GM12878 (cell line): ENCODE measurements at regions of chr14 and their contacts with region 1.

Region 1: GRCh38 chr14:69611201-69612011 is at the start of gene SUSD6:
- DNase-seq: no peak
- ATAC-seq: peak; percentile 62
- H3K4me3 ChIP-seq: peak within 1 kb of the TSS; percentile 88
- H3K27ac ChIP-seq: peak within 1 kb of the TSS; percentile 97
- H3K4me1 ChIP-seq: peaks cover 21% of the 10 kb centered on the region
- H3K27me3 ChIP-seq: no peaks in the 10 kb centered on the region
- CTCF ChIP-seq: no peak
- EP300 ChIP-seq: no peak
- POLR2A ChIP-seq: peak; percentile 76
- RAD21 ChIP-seq: no peak
- polyA plus RNA-seq, gene SUSD6: 6.6 to 9.4 TPM

Region 2: DNA sequence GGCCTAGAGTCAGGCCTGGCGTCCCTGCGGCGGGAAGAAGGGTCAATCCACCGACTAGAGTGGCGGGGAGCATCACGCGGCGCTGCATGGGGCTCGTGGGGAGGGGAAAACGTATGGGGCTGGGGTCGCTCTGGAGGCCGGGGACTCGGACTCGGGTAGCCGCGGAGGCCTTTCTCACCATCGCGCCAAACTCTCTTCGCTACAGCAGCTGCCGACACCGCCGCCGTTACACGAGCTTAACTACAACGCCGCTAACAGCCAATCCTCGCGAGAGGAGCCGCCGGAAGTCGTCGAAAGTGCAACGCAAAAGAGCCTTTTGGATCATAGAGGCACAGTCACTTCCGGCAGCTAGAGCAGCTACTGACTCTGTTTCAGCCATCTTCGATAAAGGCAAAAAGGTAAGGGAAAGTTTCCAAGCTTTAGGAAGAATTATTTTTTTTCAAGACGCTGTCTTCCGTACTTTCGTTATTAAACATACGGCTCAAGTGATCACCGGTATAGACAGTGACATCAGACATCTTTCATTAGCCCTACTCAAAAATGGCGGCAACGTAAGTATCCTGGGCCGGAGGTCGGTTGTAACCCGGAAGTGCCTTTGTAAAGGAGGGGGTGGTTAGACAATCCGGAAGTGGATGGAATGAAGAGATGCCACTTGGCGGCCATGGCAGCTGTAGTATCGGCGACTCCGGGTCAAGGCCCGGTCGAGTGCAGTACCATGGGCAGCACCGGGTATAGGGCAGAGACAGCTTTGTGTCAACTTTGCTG is 213.2 kb before region 1 on chr14 and contains the starts of genes ERH and SLC39A9:
- CTCF ChIA-PET with region 1: no interaction called
- POLR2A ChIA-PET with region 1: no interaction called
- RAD21 ChIA-PET with region 1: no interaction called
- SMC1A ChIA-PET with region 1: no interaction called
- in situ Hi-C with region 1: no loop called
- intact Hi-C with region 1: loop called (anchors 10 kb)
- DNase-seq: peak; percentile 97
- ATAC-seq: peak; percentile 85
- H3K4me3 ChIP-seq: peak within 1 kb of the TSS; percentile 98
- H3K27ac ChIP-seq: peak within 1 kb of the TSS; percentile 90
- H3K4me1 ChIP-seq: peaks cover 16% of the 10 kb centered on the region
- H3K27me3 ChIP-seq: no peaks in the 10 kb centered on the region
- CTCF ChIP-seq: no peak
- EP300 ChIP-seq: no peak
- POLR2A ChIP-seq: peak; percentile 91
- RAD21 ChIP-seq: no peak
- polyA plus RNA-seq, gene ERH: 538 to 852 TPM
- polyA plus RNA-seq, gene SLC39A9: 19.9 to 29.5 TPM

Region 3: GRCh38 chr14:69423279-69423678 is 188.1 kb before region 1 on chr14:
- CTCF ChIA-PET with region 1: no interaction called
- POLR2A ChIA-PET with region 1: no interaction called
- RAD21 ChIA-PET with region 1: no interaction called
- SMC1A ChIA-PET with region 1: no interaction called
- in situ Hi-C with region 1: no loop called
- intact Hi-C with region 1: no loop called
- DNase-seq: no peak
- ATAC-seq: no peak
- H3K4me3 ChIP-seq: no peak overlapping the region
- H3K27ac ChIP-seq: no peak overlapping the region
- H3K4me1 ChIP-seq: peaks cover 9% of the 10 kb centered on the region; the same call in 1 of the 2 replicates
- H3K27me3 ChIP-seq: no peaks in the 10 kb centered on the region
- CTCF ChIP-seq: no peak
- EP300 ChIP-seq: no peak
- POLR2A ChIP-seq: no peak
- RAD21 ChIP-seq: no peak

Region 4: DNA sequence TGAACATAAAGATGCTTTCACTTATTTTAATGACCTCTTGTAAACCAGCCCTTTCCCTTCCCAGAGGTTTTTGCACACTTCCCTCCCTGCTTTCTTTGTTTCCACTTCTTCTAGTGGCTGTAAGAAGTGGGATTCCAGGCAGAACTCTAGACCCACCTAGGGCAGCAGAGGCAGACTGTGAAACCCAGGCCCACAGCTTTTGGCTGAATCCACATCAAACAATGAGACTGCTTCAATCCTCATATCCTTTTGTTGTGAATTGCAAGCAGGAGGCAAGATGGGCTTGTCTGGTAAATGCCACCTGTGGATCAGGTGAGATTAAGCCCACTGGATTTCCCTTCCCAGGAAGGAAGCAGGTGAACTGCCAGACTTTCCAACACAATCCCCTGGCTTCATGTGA is 49.5 kb before region 1 on chr14:
- CTCF ChIA-PET with region 1: no interaction called
- POLR2A ChIA-PET with region 1: no interaction called
- RAD21 ChIA-PET with region 1: no interaction called
- SMC1A ChIA-PET with region 1: no interaction called
- in situ Hi-C with region 1: no loop called
- intact Hi-C with region 1: no loop called
- DNase-seq: no peak
- ATAC-seq: no peak
- H3K4me3 ChIP-seq: no peak overlapping the region
- H3K27ac ChIP-seq: no peak overlapping the region
- H3K4me1 ChIP-seq: no peaks in the 10 kb centered on the region
- H3K27me3 ChIP-seq: peaks cover 0 to 3% of the 10 kb centered on the region in 2 experiments; a peak in 3 of 4 replicates
- CTCF ChIP-seq: no peak
- EP300 ChIP-seq: no peak
- POLR2A ChIP-seq: no peak
- RAD21 ChIP-seq: no peak

Region 5: GRCh38 chr14:69637503-69638030 is 26.2 kb after region 1 on chr14:
- CTCF ChIA-PET with region 1: interaction called, 6 read pairs
- POLR2A ChIA-PET with region 1: interaction called, 9 read pairs
- RAD21 ChIA-PET with region 1: interaction called, 37 read pairs
- SMC1A ChIA-PET with region 1: interaction called, 135 read pairs
- in situ Hi-C with region 1: no loop called
- intact Hi-C with region 1: no loop called
- DNase-seq: no peak
- ATAC-seq: peak; percentile 57
- H3K4me3 ChIP-seq: peak overlapping the region; percentile 43; the same call in 1 of the 2 replicates
- H3K27ac ChIP-seq: peak overlapping the region; percentile 72
- H3K4me1 ChIP-seq: peaks cover 65% of the 10 kb centered on the region
- H3K27me3 ChIP-seq: no peaks in the 10 kb centered on the region
- CTCF ChIP-seq: no peak
- EP300 ChIP-seq: no peak
- POLR2A ChIP-seq: no peak
- RAD21 ChIP-seq: no peak

Region 6: GRCh38 chr14:69648477-69649451 is 37.4 kb after region 1 on chr14:
- CTCF ChIA-PET with region 1: interaction called, 36 read pairs
- POLR2A ChIA-PET with region 1: interaction called, 22 read pairs
- RAD21 ChIA-PET with region 1: interaction called, 178 read pairs
- SMC1A ChIA-PET with region 1: interaction called, 164 read pairs
- in situ Hi-C with region 1: no loop called
- intact Hi-C with region 1: loop called (anchors 2 kb)
- DNase-seq: peak; percentile 81
- ATAC-seq: peak; percentile 85
- H3K4me3 ChIP-seq: peak overlapping the region; percentile 56
- H3K27ac ChIP-seq: peak overlapping the region; percentile 96
- H3K4me1 ChIP-seq: peaks cover 68% of the 10 kb centered on the region
- H3K27me3 ChIP-seq: no peaks in the 10 kb centered on the region
- CTCF ChIP-seq: no peak
- EP300 ChIP-seq: peak in 1 of 2 experiments; percentile 75; a peak in 2 of 4 replicates
- POLR2A ChIP-seq: no peak
- RAD21 ChIP-seq: no peak

Region 7: GRCh38 chr14:69673578-69674305 is 62.3 kb after region 1 on chr14:
- CTCF ChIA-PET with region 1: interaction called, 10 read pairs
- POLR2A ChIA-PET with region 1: interaction called, 4 read pairs
- RAD21 ChIA-PET with region 1: interaction called, 15 read pairs
- SMC1A ChIA-PET with region 1: interaction called, 10 read pairs
- in situ Hi-C with region 1: loop called (anchors 10 kb)
- intact Hi-C with region 1: loop called (anchors 1 kb)
- DNase-seq: no peak
- ATAC-seq: peak; percentile 46
- H3K4me3 ChIP-seq: no peak overlapping the region
- H3K27ac ChIP-seq: peak overlapping the region; percentile 77
- H3K4me1 ChIP-seq: peaks cover 72% of the 10 kb centered on the region
- H3K27me3 ChIP-seq: no peaks in the 10 kb centered on the region
- CTCF ChIP-seq: peak in 2 of 3 experiments; percentile 15 to 16; a peak in 2 of 6 replicates
- EP300 ChIP-seq: no peak
- POLR2A ChIP-seq: no peak
- RAD21 ChIP-seq: peak; percentile 25; the same call in 1 of the 2 replicates

Region 8: GRCh38 chr14:69708586-69709174 is 97.3 kb after region 1 on chr14:
- CTCF ChIA-PET with region 1: interaction called, 11 read pairs
- POLR2A ChIA-PET with region 1: interaction called, 5 read pairs
- RAD21 ChIA-PET with region 1: interaction called, 14 read pairs
- SMC1A ChIA-PET with region 1: interaction called, 46 read pairs
- in situ Hi-C with region 1: no loop called
- intact Hi-C with region 1: no loop called
- DNase-seq: no peak
- ATAC-seq: peak; percentile 89
- H3K4me3 ChIP-seq: no peak overlapping the region
- H3K27ac ChIP-seq: no peak overlapping the region
- H3K4me1 ChIP-seq: peaks cover 9% of the 10 kb centered on the region
- H3K27me3 ChIP-seq: no peaks in the 10 kb centered on the region
- CTCF ChIP-seq: peak; percentile 20 to 44 (median 30); a peak in 3 of 6 replicates
- EP300 ChIP-seq: no peak
- POLR2A ChIP-seq: no peak
- RAD21 ChIP-seq: peak; percentile 41; the same call in 1 of the 2 replicates